GM12878 (cell line): ENCODE measurements at regions of chr6 and their contacts with region 1.

Region 1: GRCh38 chr6:36594029-36594815 is at the start of gene SRSF3:
- DNase-seq: peak; percentile 90
- ATAC-seq: peak; percentile 89
- H3K4me3 ChIP-seq: peak within 1 kb of the TSS; percentile 100
- H3K27ac ChIP-seq: peak within 1 kb of the TSS; percentile 87
- H3K4me1 ChIP-seq: peaks cover 11% of the 10 kb centered on the region
- H3K27me3 ChIP-seq: no peaks in the 10 kb centered on the region
- CTCF ChIP-seq: peak; percentile 20 to 43 (median 28); a peak in 3 of 6 replicates
- EP300 ChIP-seq: peak in 1 of 2 experiments; percentile 56; a peak in 2 of 4 replicates
- POLR2A ChIP-seq: peak; percentile 100
- RAD21 ChIP-seq: no peak
- polyA plus RNA-seq, gene SRSF3: 971 to 1,377 TPM

Region 2: DNA sequence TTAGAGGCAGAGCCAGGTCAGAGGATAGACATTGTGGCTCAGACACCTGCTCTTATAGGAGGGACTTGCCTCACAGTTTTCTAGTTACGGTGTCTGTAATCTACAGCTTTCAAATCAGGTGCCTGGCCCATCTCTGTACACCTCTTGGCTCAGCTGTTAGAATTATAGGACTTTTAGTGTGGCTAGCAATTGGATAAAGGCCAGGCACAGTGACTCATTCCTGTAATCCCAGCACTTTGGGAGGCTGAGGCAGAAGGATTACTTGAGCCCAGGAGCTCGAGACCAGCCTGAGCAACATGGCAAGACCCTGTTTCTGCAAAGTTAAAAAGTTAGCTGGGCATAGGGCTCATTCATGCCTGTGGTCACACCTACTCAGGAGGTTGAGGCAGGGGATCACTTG is 377.7 kb before region 1 on chr6:
- CTCF ChIA-PET with region 1: no interaction called
- POLR2A ChIA-PET with region 1: no interaction called
- RAD21 ChIA-PET with region 1: no interaction called
- SMC1A ChIA-PET with region 1: no interaction called
- in situ Hi-C with region 1: no loop called
- intact Hi-C with region 1: no loop called
- DNase-seq: no peak
- ATAC-seq: no peak
- H3K4me3 ChIP-seq: no peak overlapping the region
- H3K27ac ChIP-seq: no peak overlapping the region
- H3K4me1 ChIP-seq: no peaks in the 10 kb centered on the region
- H3K27me3 ChIP-seq: no peaks in the 10 kb centered on the region
- CTCF ChIP-seq: no peak
- EP300 ChIP-seq: no peak
- POLR2A ChIP-seq: no peak
- RAD21 ChIP-seq: no peak

Region 3: DNA sequence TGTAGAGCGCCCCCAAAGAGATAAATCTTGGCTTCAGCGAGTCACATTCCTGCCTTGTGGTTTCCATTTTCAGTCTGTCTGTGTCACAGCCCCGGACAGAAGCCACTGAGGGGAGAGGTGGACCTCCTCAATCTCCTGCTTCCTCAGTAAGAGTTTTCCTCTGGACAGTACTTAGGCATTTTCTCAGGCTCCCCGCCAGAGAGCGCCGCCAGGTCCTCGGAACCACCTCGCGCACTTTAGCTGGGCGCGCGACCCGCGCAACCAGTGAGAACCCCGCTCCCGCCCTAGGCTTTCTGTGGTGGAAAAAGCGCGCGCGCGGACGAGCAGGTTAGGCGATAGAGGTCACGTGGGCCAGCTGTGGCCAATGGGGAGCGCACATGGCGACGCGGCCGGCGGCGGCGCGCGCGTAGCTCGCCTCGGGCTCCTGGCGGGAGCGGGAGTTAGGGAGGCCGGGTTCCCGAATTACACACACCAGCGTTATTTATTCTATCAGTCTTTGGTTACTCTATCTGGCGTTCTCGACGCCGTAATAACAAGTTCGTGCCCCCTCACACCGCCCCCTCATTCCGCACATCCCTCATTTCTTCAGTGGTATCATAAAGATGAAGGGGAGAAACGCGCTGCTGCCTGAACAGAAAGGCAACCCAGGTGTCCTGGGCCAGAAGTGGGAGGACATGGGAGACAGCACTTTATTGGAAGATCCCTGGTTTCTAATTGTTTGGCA is 171.0 kb before region 1 on chr6:
- CTCF ChIA-PET with region 1: interaction called, 9 read pairs
- POLR2A ChIA-PET with region 1: interaction called, 3 read pairs
- RAD21 ChIA-PET with region 1: interaction called, 8 read pairs
- SMC1A ChIA-PET with region 1: interaction called, 7 read pairs
- in situ Hi-C with region 1: no loop called
- intact Hi-C with region 1: loop called (anchors 5 kb)
- DNase-seq: peak; percentile 85
- ATAC-seq: peak; percentile 98
- H3K4me3 ChIP-seq: peak overlapping the region; percentile 69
- H3K27ac ChIP-seq: peak overlapping the region; percentile 82
- H3K4me1 ChIP-seq: peaks cover 8% of the 10 kb centered on the region
- H3K27me3 ChIP-seq: no peaks in the 10 kb centered on the region
- CTCF ChIP-seq: peak; percentile 74 to 84 (median 74)
- EP300 ChIP-seq: no peak
- POLR2A ChIP-seq: peak; percentile 80
- RAD21 ChIP-seq: peak; percentile 74